ENCODE measurements at regions of chr4 and their contacts with region 1.

Region 1: DNA sequence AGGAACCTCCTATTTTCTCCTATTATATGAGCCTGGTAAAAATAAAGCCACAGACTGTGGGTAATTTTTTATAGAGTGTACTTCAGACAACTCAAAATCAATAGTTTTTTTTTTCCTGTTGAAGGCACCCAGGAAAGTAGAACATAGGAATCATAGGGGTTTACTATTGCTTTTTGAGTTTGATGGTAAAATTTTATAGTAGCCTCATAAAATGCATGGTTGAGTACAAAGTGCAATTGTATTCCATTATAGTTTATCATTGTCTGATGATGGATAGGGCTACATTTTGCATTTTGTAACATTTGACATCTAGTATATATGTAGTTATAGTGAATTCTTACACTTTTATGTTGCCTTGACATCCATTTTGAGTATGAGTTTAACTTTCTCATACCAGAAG is 455.0 kb downstream of the STIM2 start:
- DNase-seq: no peak
- H3K4me3 ChIP-seq: no peak overlapping the region
- H3K27ac ChIP-seq: no peak overlapping the region
- H3K4me1 ChIP-seq: no peaks in the 10 kb centered on the region
- H3K27me3 ChIP-seq: no peaks in the 10 kb centered on the region
- CTCF ChIP-seq: no peak
- POLR2A ChIP-seq: no peak

Region 2: DNA sequence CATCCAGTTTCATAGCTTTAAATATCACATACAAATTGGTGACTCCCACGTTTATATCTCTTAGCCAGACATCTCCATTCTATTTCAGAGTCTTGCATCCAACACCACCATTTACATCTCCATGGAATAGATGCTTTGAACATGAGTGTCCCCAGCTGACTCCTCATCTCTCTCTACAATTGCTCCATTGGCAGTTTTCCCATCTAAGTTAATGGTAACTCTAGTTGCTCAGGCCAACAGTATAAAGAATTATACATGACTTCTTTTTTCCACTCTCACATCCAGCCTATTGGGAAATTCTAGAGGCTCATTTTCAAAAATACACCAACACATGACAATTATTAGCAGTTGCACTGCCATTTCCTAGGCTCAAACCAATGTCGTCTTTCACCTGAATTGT is 66.8 kb before region 1 on chr4:
- intact Hi-C with region 1: no loop called
- DNase-seq: no peak
- H3K4me3 ChIP-seq: no peak overlapping the region
- H3K27ac ChIP-seq: peak overlapping the region in 1 of 2 donors; percentile 32
- H3K4me1 ChIP-seq: no peaks in the 10 kb centered on the region
- H3K27me3 ChIP-seq: no peaks in the 10 kb centered on the region
- CTCF ChIP-seq: no peak
- POLR2A ChIP-seq: no peak

Region 3: GRCh38 chr4:27293831-27294230 is 21.8 kb before region 1 on chr4:
- intact Hi-C with region 1: loop called (anchors 1 kb)
- DNase-seq: no peak
- H3K4me3 ChIP-seq: no peak overlapping the region
- H3K27ac ChIP-seq: no peak overlapping the region
- H3K4me1 ChIP-seq: no peaks in the 10 kb centered on the region
- H3K27me3 ChIP-seq: no peaks in the 10 kb centered on the region
- CTCF ChIP-seq: no peak
- POLR2A ChIP-seq: no peak

Measured in breast epithelium (tissue), 4 donors.